ENCODE measurements at regions of chr3 and their contacts with region 1.

Region 1: GRCh38 chr3:57889807-57890206 is 118.4 kb upstream of the FLNB start:
- DNase-seq: no peak

Region 2: DNA sequence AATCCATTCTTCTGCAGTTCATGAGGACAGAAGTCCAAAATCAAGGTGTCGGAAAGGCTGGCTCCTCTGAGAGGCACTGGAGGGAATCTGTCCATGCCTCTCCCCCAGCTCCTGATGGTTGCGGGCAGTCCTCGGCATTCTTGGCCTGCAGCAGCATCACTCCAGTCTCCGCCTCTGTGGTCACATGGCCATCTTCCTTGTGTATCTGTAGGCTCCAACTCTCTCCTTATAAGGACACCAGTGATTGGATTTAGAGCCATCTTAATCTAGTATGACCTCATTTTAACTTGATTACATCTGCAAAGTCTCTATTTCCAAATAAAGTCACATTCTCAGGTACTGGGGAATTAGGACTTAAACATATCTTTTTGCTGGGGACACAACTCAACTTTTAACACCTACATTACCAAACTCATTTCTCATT is 62.4 kb after region 1 on chr3:
- intact Hi-C with region 1: loop called (anchors 2 kb)
- DNase-seq: peak; percentile 83

Region 3: DNA sequence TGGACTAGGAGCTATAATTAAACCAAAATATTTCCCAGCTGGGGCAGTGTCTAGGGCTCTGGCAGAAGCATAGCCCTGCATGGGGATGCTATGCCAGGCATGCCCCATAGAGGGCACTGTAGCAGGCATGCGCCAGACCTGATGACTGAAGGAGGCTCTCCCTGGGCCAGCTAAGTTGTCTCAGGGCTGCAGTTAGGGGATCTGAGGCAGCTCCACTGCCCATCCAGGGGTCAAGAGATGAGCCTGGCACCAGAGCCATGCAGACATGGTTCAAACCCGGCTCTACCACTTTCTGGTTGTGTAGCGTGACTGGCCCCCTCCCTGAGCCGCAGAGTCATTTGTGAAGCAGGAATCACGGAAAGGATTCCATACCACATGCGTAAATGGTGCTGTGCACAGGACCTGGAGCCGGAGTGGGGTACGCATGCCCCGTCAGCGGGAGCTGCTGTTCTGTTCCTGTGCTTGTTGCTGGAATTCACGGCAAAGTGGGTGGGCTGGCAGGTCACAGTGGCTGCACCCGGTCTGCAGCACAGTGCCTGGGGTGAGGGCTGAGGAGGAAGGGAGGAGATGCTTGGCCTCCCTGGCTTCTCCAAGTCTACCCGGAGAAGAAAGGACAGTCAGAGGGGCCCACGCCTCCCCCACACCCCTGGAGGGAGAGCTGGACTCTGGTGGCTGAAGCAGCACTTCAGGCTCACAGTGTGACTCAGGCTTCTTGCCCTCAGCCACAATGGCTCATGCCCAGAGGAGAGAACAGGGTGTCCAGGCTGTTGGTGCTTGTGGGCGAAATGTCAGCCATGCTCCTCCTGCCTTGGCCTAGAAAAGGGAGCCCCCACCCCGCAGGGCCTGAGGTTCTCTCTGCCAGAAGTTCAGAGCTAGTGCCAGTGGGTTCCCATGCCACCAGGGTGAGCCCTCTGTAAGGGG is 277.9 kb after region 1 on chr3:
- intact Hi-C with region 1: loop called (anchors 10 kb)
- DNase-seq: no peak

Measured in cardiac septum (tissue), 1 donor.